CD8-positive, alpha-beta memory T cell (primary cell): ENCODE measurements at regions of chr5 and their contacts with region 1.

Region 1: GRCh38 chr5:36264202-36264760 is 22.6 kb upstream of the NADK2 start:
- DNase-seq: no peak
- H3K4me3 ChIP-seq: no peak overlapping the region
- H3K4me3 Mint-ChIP-seq: no peak overlapping the region
- H3K27ac ChIP-seq: no peak overlapping the region
- H3K27ac Mint-ChIP-seq: no peak overlapping the region
- H3K4me1 ChIP-seq: no peaks in the 10 kb centered on the region
- H3K4me1 Mint-ChIP-seq: no peaks in the 10 kb centered on the region
- H3K27me3 ChIP-seq: peaks cover 8% of the 10 kb centered on the region
- H3K27me3 Mint-ChIP-seq: peaks cover 21 to 53% of the 10 kb centered on the region in 2 donors

Region 2: GRCh38 chr5:36252722-36253365 is 11.4 kb before region 1 on chr5:
- CTCF ChIA-PET with region 1: interaction called, 10 read pairs
- POLR2A ChIA-PET with region 1: interaction called, 13 read pairs
- DNase-seq: no peak
- H3K4me3 ChIP-seq: no peak overlapping the region
- H3K4me3 Mint-ChIP-seq: no peak overlapping the region
- H3K27ac ChIP-seq: no peak overlapping the region
- H3K27ac Mint-ChIP-seq: peak overlapping the region in 1 of 8 donors; percentile 21
- H3K4me1 ChIP-seq: no peaks in the 10 kb centered on the region
- H3K4me1 Mint-ChIP-seq: no peaks in the 10 kb centered on the region
- H3K27me3 ChIP-seq: no peaks in the 10 kb centered on the region
- H3K27me3 Mint-ChIP-seq: peaks cover 12 to 54% of the 10 kb centered on the region in 2 donors

Region 3: GRCh38 chr5:36277521-36278176 is 13.4 kb after region 1 on chr5:
- CTCF ChIA-PET with region 1: interaction called, 7 read pairs
- POLR2A ChIA-PET with region 1: interaction called, 12 read pairs
- DNase-seq: no peak
- H3K4me3 ChIP-seq: no peak overlapping the region
- H3K4me3 Mint-ChIP-seq: no peak overlapping the region
- H3K27ac ChIP-seq: no peak overlapping the region
- H3K27ac Mint-ChIP-seq: no peak overlapping the region
- H3K4me1 ChIP-seq: no peaks in the 10 kb centered on the region
- H3K4me1 Mint-ChIP-seq: no peaks in the 10 kb centered on the region
- H3K27me3 ChIP-seq: no peaks in the 10 kb centered on the region
- H3K27me3 Mint-ChIP-seq: peaks cover 7 to 26% of the 10 kb centered on the region in 2 donors